ENCODE measurements at regions of chr6 and their contacts with region 1.

Region 1: DNA sequence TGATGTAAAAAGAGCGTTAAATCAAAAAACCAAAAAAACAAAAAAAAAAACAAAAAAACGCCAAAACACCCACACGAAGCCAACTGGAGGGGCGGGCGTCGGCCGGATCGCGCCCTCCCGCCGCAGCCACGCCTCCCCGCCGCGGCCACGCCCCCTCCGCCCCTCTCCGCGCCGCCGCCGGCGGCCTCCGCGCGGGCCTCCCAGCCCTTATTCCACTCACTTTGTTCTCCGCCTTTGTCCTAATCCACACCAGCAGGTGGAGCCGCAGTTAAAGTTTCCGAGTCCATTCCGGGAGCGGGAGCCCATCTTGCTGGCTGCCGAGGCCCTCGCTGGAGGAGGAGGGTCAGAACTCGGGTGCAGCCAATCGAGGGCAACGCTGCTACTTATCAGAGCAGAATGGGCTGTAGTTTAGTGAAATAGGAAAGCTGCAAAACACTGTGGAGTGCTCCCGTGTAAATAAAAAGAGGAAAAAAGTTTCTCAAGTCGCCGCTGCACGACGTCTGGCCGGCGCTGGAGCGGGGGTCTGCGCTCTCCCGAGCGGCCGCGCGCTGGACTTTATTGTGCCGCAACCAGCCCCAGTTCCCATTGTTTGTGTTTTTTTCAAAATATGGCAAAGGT is at the start of gene ASF1A:
- DNase-seq: peak; percentile 98 to 99
- H3K4me3 ChIP-seq: peak within 1 kb of the TSS; percentile 82 to 97 (median 90)
- H3K27ac ChIP-seq: peak within 1 kb of the TSS; percentile 94 to 98 (median 97)
- H3K4me1 ChIP-seq: peaks cover 0 to 30% of the 10 kb centered on the region in 2 donors
- H3K27me3 ChIP-seq: no peaks in the 10 kb centered on the region
- CTCF ChIP-seq: peak in 4 of 6 experiments; percentile 51 to 82 (median 60)
- POLR2A ChIP-seq: peak in 1 of 2 donors; percentile 91
- total RNA-seq, gene ASF1A: 22.2 to 25.9 (median 23.7) TPM

Region 2: GRCh38 chr6:118761645-118762044 is 132.3 kb before region 1 on chr6:
- intact Hi-C with region 1: no loop called
- DNase-seq: no peak
- H3K4me3 ChIP-seq: no peak overlapping the region
- H3K27ac ChIP-seq: no peak overlapping the region
- H3K4me1 ChIP-seq: no peaks in the 10 kb centered on the region
- H3K27me3 ChIP-seq: no peaks in the 10 kb centered on the region
- CTCF ChIP-seq: no peak
- POLR2A ChIP-seq: no peak

Region 3: DNA sequence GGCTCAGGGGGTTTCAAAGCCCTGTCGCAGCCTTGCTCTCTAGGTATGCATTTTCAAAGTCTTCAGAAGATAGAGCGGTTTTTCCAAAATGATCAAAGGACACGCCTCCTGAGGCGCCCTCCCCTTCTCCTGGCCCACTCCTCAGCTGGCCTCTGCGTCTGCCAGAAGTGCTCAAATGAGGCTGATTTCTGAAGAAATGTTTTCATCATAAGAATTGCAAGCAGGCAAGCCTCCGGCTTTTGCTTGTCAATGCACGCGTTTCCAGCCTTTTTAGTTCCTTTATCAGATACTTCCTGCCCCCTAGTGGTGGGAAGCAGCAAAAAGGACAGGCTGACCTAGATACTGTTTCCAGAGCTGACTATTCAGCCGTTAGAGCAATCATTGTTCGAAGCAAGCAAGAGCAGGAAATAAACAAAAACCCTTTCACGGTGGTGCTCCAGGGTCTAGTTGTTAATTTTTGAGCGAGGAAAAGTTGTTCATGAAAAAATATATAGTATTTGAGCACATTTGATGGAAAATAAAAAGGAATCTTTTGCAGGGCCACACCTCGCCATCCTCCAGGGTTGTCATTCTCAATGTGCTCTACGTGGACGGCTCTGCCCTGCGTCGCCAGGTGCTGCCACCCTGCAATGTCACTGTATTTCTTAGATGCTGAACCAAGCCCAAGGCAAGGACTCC is 93.4 kb before region 1 on chr6:
- intact Hi-C with region 1: no loop called
- DNase-seq: peak; percentile 81 to 83
- H3K4me3 ChIP-seq: no peak overlapping the region
- H3K27ac ChIP-seq: no peak overlapping the region
- H3K4me1 ChIP-seq: peaks cover 0 to 4% of the 10 kb centered on the region in 2 donors
- H3K27me3 ChIP-seq: no peaks in the 10 kb centered on the region
- CTCF ChIP-seq: peak; percentile 57 to 93 (median 74)
- POLR2A ChIP-seq: no peak

Region 4: DNA sequence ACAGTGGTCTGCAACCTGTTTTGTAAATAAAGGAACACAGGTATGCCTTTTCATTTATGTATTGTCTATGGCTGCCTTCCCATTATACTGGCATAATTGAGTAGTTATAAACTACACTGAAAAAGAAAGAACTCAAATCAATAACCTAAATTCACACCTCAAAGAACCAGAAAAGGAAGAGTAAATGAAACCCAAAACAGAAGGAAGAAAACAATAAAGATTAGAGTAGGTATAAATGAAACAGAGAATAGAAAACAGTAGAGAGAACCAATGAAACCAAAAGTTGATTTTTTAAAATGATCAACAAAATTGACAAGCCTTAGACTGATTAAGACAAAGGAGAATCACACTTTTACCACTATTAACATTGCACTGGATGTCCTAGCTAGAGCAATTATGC is 149.9 kb after region 1 on chr6:
- intact Hi-C with region 1: no loop called
- DNase-seq: no peak
- H3K4me3 ChIP-seq: no peak overlapping the region
- H3K27ac ChIP-seq: no peak overlapping the region
- H3K4me1 ChIP-seq: peaks cover 0 to 5% of the 10 kb centered on the region in 2 donors
- H3K27me3 ChIP-seq: no peaks in the 10 kb centered on the region
- CTCF ChIP-seq: no peak
- POLR2A ChIP-seq: no peak

Region 5: GRCh38 chr6:119078376-119079282 is 184.7 kb after region 1 on chr6 and contains the start of gene FAM184A:
- intact Hi-C with region 1: loop called (anchors 10 kb)
- DNase-seq: peak; percentile 68 to 70
- H3K4me3 ChIP-seq: peak within 1 kb of the TSS; percentile 67 to 89 (median 75)
- H3K27ac ChIP-seq: peak within 1 kb of the TSS; percentile 81 to 94 (median 89)
- H3K4me1 ChIP-seq: peaks cover 2 to 25% of the 10 kb centered on the region in 2 donors
- H3K27me3 ChIP-seq: no peaks in the 10 kb centered on the region
- CTCF ChIP-seq: peak in 4 of 6 experiments; percentile 27 to 55 (median 43)
- POLR2A ChIP-seq: peak in 1 of 2 donors; percentile 67
- total RNA-seq, gene FAM184A: 19.3 to 37.1 (median 21.3) TPM